ENCODE measurements at regions of chr7 and their contacts with region 1.

Region 1: DNA sequence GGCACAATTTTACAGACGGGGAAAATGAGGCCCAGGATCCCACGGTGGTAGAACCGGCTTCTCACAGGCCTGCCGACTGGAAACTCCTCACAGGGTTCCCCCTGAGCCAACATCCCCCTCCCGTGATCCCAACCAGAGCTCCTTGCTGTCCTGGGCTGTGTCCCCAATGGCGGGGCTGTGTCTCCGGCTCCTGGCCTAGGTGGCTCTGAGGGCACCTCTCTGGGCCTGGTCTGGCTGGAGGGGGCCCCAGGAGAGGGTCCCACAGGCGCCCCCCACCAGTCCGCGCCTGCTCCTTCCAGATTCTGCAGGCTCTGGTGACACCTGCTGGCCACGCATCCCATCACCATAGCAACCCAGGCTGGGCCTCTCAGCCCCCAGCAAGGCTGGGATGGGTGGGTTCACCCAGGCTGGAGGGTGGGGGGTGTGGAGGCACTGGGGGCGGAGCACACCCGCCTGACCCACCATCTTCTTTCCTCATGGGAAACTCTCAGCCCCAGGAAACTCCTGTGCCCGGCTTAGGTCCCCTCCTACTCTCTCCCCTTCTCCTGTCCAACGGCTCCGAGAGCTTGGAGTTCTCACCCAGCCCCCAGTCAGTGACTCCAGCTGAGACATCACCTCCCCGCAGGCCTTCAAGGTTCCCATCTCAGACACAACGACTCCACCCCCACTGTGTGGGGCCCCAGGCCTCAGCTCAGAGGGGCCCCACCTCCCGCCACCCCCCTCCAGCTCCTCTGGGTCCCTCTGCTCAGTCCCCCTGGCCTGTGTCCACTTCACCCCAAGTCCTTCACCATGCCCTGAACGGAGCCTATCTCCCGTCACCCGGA is 27.1 kb upstream of the TNRC18 start:
- DNase-seq: peak; percentile 79
- ATAC-seq: peak; percentile 84
- H3K4me3 Mint-ChIP-seq: no peak overlapping the region
- H3K27ac Mint-ChIP-seq: no peak overlapping the region
- H3K4me1 Mint-ChIP-seq: peaks cover 6% of the 10 kb centered on the region
- H3K27me3 Mint-ChIP-seq: peaks cover 3% of the 10 kb centered on the region; the same call in 1 of the 2 replicates
- CTCF ChIP-seq: peak; percentile 56

Region 2: DNA sequence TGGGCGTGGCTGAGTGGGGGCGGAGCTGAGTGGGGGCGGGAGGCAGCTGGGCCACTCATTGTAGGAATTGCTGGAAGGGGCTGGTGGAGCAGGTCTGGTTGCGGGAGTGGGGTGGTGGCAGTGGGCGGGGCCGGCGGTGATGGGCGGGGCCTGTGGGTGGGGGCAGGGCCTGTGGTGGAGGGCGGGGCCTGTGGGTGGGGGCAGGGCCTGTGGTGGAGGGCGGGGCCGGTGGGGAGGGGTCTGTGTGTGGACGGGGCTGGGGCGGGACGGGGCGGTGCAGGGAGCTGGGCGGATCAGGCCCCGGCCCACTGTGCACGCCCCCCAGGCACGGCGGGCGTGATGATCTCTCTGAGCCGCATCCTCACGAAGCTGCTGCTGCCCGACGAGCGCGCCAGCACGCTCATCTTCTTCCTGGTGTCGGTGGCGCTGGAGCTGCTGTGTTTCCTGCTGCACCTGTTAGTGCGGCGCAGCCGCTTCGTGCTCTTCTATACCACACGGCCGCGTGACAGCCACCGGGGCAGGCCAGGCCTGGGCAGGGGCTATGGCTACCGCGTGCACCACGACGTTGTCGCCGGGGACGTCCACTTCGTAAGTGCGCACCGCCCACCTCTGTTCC is 154.0 kb before region 1 on chr7:
- CTCF ChIA-PET with region 1: interaction called, 10 read pairs
- POLR2A ChIA-PET with region 1: no interaction called
- DNase-seq: peak; percentile 88
- ATAC-seq: peak; percentile 81
- H3K4me3 Mint-ChIP-seq: peak overlapping the region; percentile 74
- H3K27ac Mint-ChIP-seq: no peak overlapping the region
- H3K4me1 Mint-ChIP-seq: peaks cover 9% of the 10 kb centered on the region
- H3K27me3 Mint-ChIP-seq: peaks cover 19% of the 10 kb centered on the region
- CTCF ChIP-seq: no peak

Region 3: GRCh38 chr7:5423844-5424688 is 26.7 kb before region 1 on chr7:
- CTCF ChIA-PET with region 1: interaction called, 13 read pairs
- POLR2A ChIA-PET with region 1: interaction called, 4 read pairs
- DNase-seq: peak; percentile 94
- ATAC-seq: peak; percentile 22
- H3K4me3 Mint-ChIP-seq: peak overlapping the region; percentile 88
- H3K27ac Mint-ChIP-seq: peak overlapping the region; percentile 97
- H3K4me1 Mint-ChIP-seq: peaks cover 11% of the 10 kb centered on the region
- H3K27me3 Mint-ChIP-seq: peaks cover 67% of the 10 kb centered on the region
- CTCF ChIP-seq: no peak